ENCODE measurements at regions of chr1 and their contacts with region 1.

Region 1: DNA sequence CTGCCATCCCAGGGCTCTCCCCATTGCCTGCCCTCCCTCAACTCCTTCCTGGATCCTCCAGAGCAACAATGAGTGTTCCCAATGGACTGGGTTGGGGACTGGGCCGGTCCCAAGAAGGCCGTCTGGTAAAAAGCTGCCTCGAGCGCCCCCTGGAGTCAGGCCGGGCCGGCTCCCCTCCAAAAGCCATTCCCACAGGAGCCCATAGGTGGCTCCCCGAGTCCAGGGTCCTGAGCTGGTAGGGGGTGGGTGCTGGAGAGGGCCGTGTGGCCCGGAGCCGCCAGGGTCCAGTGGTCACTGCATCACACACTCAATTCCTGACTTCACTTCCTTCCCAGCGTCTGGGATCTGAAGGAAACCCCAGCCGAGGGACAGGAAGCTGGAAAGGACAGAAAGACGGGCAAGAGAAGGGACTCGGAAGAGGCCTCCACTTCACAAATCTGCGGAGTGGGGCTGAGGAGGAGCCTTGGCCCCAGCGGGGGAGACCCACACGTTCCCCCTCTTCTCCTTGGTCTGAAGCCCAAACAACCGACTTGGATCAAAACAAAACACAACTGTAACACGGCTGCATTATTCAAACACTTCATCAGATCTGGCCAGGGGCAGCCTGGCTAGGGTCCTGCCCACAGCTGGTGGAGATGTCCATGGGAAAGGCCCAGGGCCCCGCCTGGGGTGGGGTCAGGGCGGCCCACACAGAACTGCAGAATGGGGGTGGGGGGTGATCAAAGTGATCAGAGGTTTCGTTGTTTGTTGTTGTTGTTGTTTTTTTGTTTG is 10.9 kb upstream of the ALDH4A1 start:
- DNase-seq: peak; percentile 70 to 96
- H3K4me3 ChIP-seq: no peak overlapping the region
- H3K27ac ChIP-seq: no peak overlapping the region
- H3K4me1 ChIP-seq: no peaks in the 10 kb centered on the region; a peak in 1 of 7 replicates
- H3K27me3 ChIP-seq: no peaks in the 10 kb centered on the region
- CTCF ChIP-seq: peak; percentile 97 to 100 (median 100)
- EP300 ChIP-seq: no peak
- POLR2A ChIP-seq: no peak
- RAD21 ChIP-seq: peak; percentile 88 to 92

Region 2: DNA sequence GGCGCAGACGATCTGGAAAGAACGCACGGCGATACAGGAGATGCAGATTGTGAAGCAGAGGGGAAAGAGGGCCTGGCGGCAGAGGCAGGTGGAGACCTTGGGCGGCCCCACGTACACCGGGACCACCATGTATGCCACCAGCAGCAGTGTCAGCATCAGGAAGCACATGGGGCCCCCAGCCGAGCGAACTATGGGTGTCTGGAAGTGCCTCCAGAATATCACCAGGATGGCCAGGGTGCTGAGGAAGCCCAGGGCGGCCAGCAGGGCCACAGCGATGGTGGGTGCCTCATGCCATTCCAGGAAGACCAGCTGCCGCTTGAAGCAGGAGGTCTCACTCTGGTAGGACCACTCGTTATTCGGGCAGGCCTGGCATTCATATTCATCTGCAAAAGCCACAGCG is 73.1 kb before region 1 on chr1:
- CTCF ChIA-PET with region 1: no interaction called
- POLR2A ChIA-PET with region 1: no interaction called
- DNase-seq: no peak
- H3K4me3 ChIP-seq: no peak overlapping the region
- H3K27ac ChIP-seq: no peak overlapping the region
- H3K4me1 ChIP-seq: no peaks in the 10 kb centered on the region
- H3K27me3 ChIP-seq: peaks cover 0 to 6% (median 3%) of the 10 kb centered on the region in 4 experiments; a peak in 3 of 7 replicates
- CTCF ChIP-seq: no peak
- EP300 ChIP-seq: no peak
- POLR2A ChIP-seq: no peak
- RAD21 ChIP-seq: no peak

Region 3: DNA sequence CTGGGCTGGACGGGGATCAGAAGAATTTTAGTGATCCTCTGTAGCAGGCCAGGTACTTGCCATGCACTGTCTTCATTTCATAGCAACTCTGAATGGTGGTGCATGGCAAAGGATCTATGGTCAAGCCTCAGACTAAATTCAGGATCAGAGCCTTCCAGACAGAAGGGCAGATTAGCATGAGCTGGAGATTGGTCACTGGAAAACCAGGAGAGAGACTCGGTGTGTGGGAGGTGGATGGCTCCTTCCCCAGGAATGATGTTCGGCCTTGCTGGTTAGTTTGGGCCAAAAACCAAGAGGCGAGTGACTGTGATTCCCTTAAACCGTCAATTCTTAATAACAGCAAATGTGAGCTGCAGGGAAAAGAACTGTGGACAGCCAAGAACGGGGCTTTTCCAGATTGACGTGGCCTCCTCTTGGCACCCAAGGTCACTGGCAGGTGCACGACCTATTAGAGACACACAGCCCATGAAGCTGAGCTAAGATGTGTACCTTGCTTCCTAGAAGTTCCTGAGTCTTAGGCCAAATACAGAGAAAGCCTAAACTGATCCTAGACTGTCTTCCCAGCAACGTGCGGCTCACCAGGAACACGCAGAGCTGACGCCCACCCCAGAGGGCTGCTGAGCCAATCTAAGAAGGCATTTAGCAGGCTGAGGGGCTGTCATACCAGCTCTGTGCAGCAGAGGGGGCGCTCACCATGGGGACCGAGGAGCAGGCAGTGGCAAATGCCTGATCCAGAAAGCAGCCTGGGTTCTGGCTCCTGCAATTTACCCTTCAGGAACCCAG is 29.4 kb before region 1 on chr1:
- CTCF ChIA-PET with region 1: interaction called, 131 read pairs
- POLR2A ChIA-PET with region 1: interaction called, 4 read pairs
- DNase-seq: peak; percentile 60 to 97
- H3K4me3 ChIP-seq: no peak overlapping the region
- H3K27ac ChIP-seq: no peak overlapping the region
- H3K4me1 ChIP-seq: peaks cover 0 to 6% (median 4%) of the 10 kb centered on the region in 4 experiments; a peak in 4 of 7 replicates
- H3K27me3 ChIP-seq: no peaks in the 10 kb centered on the region
- CTCF ChIP-seq: peak; percentile 84 to 97 (median 93)
- EP300 ChIP-seq: no peak
- POLR2A ChIP-seq: no peak
- RAD21 ChIP-seq: peak; percentile 86 to 92

Region 4: DNA sequence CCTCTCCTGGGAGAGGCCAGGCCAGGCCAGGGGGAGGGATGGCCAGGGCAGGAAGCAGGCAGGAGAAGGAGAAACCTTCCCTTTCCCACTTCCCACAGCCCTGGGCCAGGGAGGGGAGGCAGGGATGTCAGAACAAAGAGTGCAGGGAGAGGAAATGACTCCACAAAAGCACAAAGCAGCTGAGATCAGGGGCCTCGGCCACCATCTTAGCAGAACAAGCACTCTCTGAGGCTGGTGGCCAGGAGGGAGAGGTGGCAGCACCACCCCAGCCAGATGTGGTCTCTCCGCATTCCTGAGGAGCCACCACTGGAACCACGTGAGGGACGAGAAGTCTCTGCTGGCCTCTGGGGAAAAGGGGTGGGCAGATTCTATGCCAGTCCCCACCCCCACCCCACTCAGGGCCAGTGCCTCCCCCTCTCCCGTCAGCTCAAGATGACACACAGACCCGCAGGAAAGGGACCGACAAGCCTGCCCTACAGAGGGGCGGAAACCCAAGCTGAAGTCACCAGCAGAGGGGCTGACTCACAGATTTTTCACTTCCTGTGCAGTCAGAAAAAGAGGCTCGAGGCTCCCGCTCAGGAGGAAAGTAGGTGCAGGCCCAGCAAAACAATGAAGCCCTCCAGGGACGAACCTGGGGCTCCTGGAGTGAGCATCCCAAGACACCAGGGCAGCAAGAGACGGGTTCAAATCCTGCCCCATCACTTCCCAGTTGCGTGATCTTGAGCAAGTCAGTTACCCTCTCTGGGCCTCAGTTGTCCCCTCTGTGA is 13.2 kb after region 1 on chr1:
- CTCF ChIA-PET with region 1: interaction called, 109 read pairs
- POLR2A ChIA-PET with region 1: interaction called, 4 read pairs
- DNase-seq: no peak
- H3K4me3 ChIP-seq: no peak overlapping the region
- H3K27ac ChIP-seq: no peak overlapping the region
- H3K4me1 ChIP-seq: peaks cover 0 to 20% (median 11%) of the 10 kb centered on the region in 4 experiments; a peak in 6 of 7 replicates
- H3K27me3 ChIP-seq: no peaks in the 10 kb centered on the region
- CTCF ChIP-seq: no peak
- EP300 ChIP-seq: no peak
- POLR2A ChIP-seq: no peak
- RAD21 ChIP-seq: no peak

Region 5: DNA sequence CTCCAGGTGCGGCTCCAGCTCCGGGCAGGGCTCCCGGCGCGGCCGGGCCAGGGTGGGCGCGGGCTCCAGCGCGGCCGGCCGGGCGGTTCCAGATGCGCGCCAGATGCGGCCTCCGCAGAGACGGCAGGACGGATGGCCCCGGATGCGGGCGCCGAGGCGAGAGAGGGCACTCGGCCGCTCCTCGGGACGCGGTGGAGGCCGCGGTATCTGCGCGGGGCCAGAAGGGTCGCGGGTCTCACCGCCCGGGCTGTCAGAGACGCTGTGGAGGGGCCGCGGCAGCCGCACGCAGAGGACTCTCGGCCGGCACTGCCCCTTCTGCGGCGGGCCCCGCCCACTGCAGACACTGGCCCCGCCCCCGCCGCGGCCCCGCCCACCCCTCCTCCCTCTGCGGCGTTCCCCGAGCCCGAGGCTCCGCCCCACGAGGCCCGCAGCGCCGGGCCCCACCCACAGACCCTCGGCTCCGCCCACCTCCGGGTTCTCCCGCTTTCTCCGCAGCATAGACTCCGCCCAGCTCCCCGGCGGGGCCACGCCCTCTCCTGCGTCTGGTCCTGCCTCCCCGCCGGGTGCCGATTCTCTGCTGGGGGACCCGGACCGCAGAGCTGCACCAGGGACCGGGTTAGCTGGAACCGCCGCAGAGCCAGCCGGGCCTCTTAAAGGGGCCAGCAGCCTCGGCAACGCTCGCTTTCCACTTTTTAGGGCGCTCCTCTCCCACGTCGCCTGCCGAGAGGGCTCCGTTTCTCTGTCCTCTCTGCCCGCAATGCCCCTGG is 43.3 kb after region 1 on chr1 and contains the start of gene IFFO2:
- CTCF ChIA-PET with region 1: interaction called, 60 read pairs
- POLR2A ChIA-PET with region 1: interaction called, 11 read pairs
- DNase-seq: peak; percentile 91 to 100
- H3K4me3 ChIP-seq: peak within 1 kb of the TSS; percentile 49 to 74 (median 64)
- H3K27ac ChIP-seq: no peak within 1 kb of the TSS
- H3K4me1 ChIP-seq: peaks cover 0 to 3% (median 2%) of the 10 kb centered on the region in 4 experiments; a peak in 4 of 7 replicates
- H3K27me3 ChIP-seq: peaks cover 5 to 40% (median 24%) of the 10 kb centered on the region in 4 experiments; a peak in 6 of 7 replicates
- CTCF ChIP-seq: no peak
- EP300 ChIP-seq: no peak
- POLR2A ChIP-seq: peak; percentile 41 to 67
- RAD21 ChIP-seq: no peak
- total RNA-seq, gene IFFO2: 8.7 and 10.4 TPM in 2 replicates

Region 6: DNA sequence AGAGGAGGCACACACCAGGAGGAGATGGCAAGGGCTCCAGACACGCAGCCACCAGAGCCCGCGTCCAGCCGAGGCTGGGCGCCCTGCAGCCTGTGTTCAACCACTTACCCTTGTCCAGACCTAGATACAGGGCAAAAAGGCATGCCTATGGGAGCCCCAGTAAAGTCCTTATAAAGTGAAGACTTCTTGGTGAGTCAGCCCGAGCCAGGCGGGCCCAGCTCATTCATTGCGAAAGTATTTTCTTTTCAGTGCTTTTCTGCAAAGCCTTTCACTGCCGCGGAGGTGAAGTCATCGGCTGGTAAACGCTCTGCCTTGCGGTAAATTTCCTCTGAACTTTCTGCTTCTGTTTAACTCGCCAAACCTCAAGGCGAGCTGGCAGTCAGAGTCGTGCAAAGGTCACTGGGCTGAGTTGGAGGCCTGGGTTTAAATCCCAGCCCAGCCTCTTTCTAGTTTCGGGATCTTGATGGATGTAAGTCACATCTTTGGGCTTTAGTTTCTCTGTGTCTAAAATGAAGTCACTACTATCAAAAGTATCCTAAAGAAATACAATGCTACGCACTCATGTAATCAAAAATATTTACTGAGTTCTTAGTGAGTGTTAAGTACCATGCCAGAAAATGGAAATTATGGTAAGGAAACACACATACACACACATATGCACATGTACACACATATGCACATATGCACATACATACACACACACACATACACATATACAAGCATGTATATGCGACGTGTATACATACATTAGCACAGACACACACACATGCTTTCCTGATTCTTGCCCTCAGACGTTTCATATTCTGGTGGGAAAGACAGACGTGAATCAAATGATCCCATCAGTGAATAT is 98.0 kb after region 1 on chr1:
- CTCF ChIA-PET with region 1: interaction called, 13 read pairs
- POLR2A ChIA-PET with region 1: no interaction called
- DNase-seq: peak in 1 of 2 experiments; percentile 69
- H3K4me3 ChIP-seq: no peak overlapping the region
- H3K27ac ChIP-seq: no peak overlapping the region
- H3K4me1 ChIP-seq: peaks cover 1 to 20% (median 9%) of the 10 kb centered on the region in 4 experiments
- H3K27me3 ChIP-seq: no peaks in the 10 kb centered on the region; a peak in 1 of 7 replicates
- CTCF ChIP-seq: no peak
- EP300 ChIP-seq: no peak
- POLR2A ChIP-seq: no peak
- RAD21 ChIP-seq: no peak

Region 7: GRCh38 chr1:19054216-19054615 is 141.0 kb after region 1 on chr1:
- CTCF ChIA-PET with region 1: interaction called, 21 read pairs
- POLR2A ChIA-PET with region 1: no interaction called
- DNase-seq: no peak
- H3K4me3 ChIP-seq: no peak overlapping the region
- H3K27ac ChIP-seq: no peak overlapping the region
- H3K4me1 ChIP-seq: peaks cover 0 to 3% (median 0%) of the 10 kb centered on the region in 4 experiments; a peak in 2 of 7 replicates
- H3K27me3 ChIP-seq: no peaks in the 10 kb centered on the region
- CTCF ChIP-seq: no peak
- EP300 ChIP-seq: no peak
- POLR2A ChIP-seq: no peak
- RAD21 ChIP-seq: no peak

Measured in H1 (cell line).